ENCODE measurements at regions of chr7 and their contacts with region 1.

Region 1: DNA sequence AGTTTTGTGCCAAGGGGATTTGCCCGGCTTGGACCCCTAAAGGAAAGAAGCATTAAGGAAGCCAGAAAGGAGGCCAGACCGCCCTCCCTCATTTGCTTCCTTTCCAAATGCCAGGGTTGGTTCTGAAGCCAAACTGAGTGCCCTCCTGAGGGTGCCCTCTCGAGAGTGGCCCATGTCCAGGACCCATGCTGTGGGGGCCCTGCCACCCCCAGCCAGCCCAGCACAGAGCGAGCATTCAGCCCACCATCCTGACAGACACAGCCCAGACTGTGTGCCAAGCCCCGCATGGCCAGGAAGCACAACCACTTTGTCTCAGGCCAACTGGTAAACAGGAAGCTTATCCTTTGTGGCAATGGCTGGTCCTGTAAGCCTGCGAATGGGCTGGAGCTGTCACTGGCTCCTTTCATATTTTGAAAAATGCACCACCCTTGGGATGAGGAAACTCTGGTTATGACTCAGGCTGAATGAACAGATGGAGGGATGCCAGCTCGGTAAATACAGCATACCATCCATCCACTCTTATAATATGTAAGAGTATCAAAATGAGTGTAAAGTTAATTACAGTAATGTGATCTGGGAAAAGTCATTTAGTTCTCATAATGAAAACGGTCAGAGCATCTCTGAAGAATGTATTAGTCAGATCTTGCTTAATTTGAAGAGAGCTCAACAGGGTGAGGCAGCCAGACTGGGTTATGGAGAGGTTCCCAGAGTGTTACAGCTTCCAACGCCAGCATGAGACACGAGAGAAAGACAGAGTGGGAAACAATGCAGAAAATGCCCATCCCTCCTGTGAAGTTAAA is 65.0 kb downstream of the STK17A start:
- DNase-seq: peak in 2 of 5 donors; percentile 40 to 57
- H3K4me3 ChIP-seq: peak overlapping the region; percentile 64
- H3K4me3 Mint-ChIP-seq: peak overlapping the region; percentile 63 to 95 (median 78)
- H3K27ac ChIP-seq: peak overlapping the region; percentile 71
- H3K27ac Mint-ChIP-seq: peak overlapping the region; percentile 73 to 100 (median 96)
- H3K4me1 ChIP-seq: peaks cover 94% of the 10 kb centered on the region
- H3K4me1 Mint-ChIP-seq: peaks cover 97 to 99% (median 98%) of the 10 kb centered on the region in 3 donors
- H3K27me3 ChIP-seq: no peaks in the 10 kb centered on the region
- H3K27me3 Mint-ChIP-seq: no peaks in the 10 kb centered on the region

Region 2: DNA sequence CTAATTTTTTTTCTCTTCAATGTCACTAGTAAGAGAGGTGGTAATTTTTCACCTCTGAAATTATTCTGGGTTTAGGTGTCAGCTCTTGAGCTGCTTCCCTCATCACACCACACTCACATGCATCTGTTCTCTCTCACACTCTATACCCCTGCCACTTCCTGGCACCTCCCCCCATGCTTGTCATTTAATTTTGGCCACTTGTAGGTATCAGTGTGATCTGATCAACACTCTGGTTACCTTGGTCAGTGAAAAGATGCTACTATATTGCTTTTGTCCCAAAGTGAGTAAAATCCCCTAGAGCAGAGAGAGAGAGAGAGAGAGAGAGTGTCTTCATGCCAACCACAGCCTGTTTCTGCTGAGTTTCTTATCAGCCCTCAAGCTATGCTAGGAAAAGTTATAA is 22.4 kb before region 1 on chr7:
- CTCF ChIA-PET with region 1: interaction called, 8 read pairs
- POLR2A ChIA-PET with region 1: interaction called, 21 read pairs
- DNase-seq: peak; percentile 52 to 87 (median 80)
- H3K4me3 ChIP-seq: no peak overlapping the region
- H3K4me3 Mint-ChIP-seq: peak overlapping the region; percentile 35 to 77 (median 73)
- H3K27ac ChIP-seq: peak overlapping the region; percentile 40
- H3K27ac Mint-ChIP-seq: peak overlapping the region in 7 of 8 donors; percentile 62 to 94 (median 91)
- H3K4me1 ChIP-seq: peaks cover 93% of the 10 kb centered on the region
- H3K4me1 Mint-ChIP-seq: peaks cover 0 to 100% (median 90%) of the 10 kb centered on the region in 3 donors
- H3K27me3 ChIP-seq: no peaks in the 10 kb centered on the region
- H3K27me3 Mint-ChIP-seq: peaks cover 0 to 3% of the 10 kb centered on the region in 2 donors

Region 3: DNA sequence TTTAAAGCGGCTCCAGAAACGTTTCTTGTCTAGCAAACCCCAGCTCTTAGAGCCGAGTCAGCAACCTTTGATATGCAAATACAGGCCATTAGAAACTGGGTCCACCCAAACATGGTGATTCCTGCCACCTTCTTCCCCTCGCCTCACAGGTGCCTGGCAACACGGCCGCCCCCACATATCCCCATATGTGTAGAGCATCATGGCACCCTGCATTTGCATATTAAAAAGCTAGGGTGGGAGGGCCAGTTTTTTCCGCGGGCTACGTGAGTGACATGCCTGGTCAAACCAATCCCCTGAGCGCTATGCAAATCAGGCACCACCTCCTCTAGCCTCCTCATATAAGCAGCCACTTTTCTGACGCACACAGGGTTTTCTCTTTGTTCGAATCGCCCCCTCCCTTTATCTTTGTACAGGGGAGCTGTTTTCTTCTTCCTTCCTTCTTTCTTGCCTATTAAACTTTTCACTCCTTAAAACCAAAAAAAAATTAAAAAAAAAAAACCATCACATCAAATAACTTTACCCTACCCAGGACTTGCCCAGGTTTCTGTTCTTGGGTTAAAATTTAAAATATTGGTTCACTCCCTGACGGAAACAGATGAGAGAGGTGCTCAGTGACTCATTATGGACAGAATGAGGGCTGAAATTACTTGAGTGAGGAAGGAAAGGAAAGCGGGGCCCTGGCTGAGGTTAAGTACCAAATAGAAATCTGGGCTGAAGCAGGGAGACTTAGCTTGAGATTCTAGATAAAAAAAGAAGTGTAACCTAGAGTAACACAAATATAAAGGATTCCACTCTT is 21.6 kb after region 1 on chr7:
- CTCF ChIA-PET with region 1: interaction called, 5 read pairs
- POLR2A ChIA-PET with region 1: interaction called, 21 read pairs
- DNase-seq: peak; percentile 46 to 85 (median 68)
- H3K4me3 ChIP-seq: no peak overlapping the region
- H3K4me3 Mint-ChIP-seq: peak overlapping the region; percentile 33 to 91 (median 71)
- H3K27ac ChIP-seq: peak overlapping the region; percentile 28
- H3K27ac Mint-ChIP-seq: peak overlapping the region; percentile 80 to 98 (median 92)
- H3K4me1 ChIP-seq: peaks cover 36% of the 10 kb centered on the region
- H3K4me1 Mint-ChIP-seq: peaks cover 69 to 90% (median 88%) of the 10 kb centered on the region in 3 donors
- H3K27me3 ChIP-seq: no peaks in the 10 kb centered on the region
- H3K27me3 Mint-ChIP-seq: peaks cover 0 to 2% of the 10 kb centered on the region in 2 donors